KBM-7 (cell line): ENCODE measurements at regions of chr1 and their contacts with region 1.

Region 1: GRCh38 chr1:222465211-222466041 is 82.5 kb downstream of the HHIPL2 start:
- DNase-seq: peak; percentile 96

Region 2: GRCh38 chr1:222643938-222644635 is 178.7 kb after region 1 on chr1:
- in situ Hi-C with region 1: loop called (anchors 25 kb)
- DNase-seq: peak; percentile 99

Region 3: DNA sequence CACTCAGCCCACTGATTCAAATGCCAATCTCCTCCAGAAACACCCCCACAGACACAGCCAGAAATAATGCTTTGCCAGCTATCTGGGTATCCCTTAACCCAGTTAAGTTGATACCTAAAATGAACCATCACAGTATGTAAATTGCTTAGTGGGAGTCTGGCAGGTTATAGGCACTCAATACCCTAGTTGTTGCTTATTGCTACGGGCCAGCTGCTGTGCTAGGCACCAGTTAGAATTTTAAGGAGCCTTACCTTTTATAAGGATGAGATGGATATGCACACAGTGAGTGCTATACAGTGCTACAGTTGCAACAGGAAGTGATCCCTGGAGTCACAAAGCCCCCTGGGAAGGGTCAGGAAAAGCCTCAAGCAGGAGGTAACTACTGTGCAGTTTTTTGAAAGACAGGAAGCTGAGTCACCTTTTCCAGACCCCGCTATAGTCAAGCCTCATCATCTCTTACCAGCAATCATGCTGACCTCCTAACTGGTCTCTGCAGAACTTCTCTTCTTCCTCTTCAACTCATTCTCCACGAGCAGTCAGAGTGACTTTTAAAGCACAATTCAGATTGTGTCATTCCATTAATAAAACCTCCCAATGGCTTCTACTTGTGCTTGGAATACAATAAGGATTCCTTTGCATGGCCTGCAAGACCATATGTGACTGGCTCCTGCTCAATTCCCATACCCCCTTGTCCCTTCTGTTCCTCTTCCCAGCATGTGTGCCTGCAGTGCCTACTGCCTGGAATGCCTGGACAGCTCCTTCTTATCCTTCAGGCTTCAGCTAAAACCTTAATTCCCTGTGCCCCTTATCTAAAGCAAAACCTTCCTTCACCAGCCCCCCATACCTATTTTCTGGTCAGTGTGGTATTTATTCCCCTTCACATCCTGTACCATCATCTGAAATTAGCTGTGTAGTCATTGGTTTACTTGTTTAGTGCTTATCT is 688.0 kb after region 1 on chr1:
- in situ Hi-C with region 1: no loop called
- DNase-seq: peak; percentile 24